PC-3 (cell line): ENCODE measurements at regions of chr3 and their contacts with region 1.

Region 1: DNA sequence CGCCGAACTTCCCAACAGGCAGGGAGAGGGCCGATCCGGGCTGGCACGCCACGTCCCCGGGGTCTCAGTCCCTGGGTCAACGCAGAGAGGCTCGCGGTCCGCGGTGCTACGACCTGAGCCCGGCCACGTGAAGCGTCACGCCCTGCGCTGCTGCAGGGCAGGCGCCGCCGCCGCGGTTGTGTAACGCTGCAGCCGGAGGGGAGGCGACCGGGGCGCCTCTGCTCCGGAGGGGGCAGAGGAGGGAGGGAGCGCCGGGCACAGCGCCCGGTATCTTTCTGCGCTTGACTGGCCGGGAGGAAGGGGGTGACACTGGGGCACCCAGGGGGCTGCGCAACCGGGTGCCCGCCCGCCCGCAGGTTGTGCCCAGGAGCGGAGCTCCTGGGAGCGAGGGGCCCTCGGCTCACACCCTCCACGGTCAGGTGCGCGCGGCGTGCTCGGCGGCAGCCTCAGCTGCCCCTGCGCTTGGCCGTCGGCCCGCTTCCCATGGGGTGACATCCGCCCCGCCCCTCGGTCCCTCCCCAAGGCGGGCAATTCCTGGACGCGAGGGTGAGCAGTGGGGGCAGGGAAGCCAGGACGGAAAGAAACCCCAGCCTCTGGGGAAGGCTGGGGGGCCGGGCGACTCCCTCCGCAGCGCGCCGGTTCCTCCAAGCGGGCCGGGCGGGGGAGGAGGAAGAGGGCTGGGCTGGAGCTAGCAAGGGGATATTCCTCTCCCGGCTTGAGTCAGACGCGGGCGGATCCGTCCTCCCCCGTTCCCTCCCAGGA is 852 bp upstream of the BHLHE40 start:
- DNase-seq: peak; percentile 98
- ATAC-seq: peak; percentile 65
- H3K4me3 ChIP-seq: peak overlapping the region; percentile 69
- H3K27ac ChIP-seq: peak overlapping the region; percentile 95
- H3K4me1 ChIP-seq: peaks cover 29% of the 10 kb centered on the region
- H3K27me3 ChIP-seq: no peaks in the 10 kb centered on the region
- CTCF ChIP-seq: no peak

Region 2: DNA sequence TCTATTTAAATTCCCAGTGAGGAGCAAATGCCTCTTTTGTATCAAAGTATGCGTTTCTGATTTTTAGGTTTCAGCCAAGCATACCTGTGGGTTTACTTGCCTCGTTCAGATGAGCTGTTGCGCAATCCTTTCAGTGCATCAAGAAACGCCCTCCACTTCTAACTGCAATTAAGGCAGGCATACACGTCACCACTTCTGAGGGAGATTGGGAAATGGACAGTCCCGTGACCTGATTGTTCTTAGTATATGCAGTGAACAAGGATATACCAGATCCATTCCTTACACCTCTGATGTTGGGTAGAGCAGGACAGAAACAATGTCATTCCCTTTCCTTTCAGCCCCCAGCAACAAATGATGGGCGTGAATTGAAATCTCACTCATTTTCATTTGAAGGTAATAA is 266.2 kb before region 1 on chr3:
- CTCF ChIA-PET with region 1: interaction called, 7 read pairs
- POLR2A ChIA-PET with region 1: interaction called, 15 read pairs
- intact Hi-C with region 1: loop called (anchors 1 kb)
- DNase-seq: peak; percentile 55
- ATAC-seq: no peak
- H3K4me3 ChIP-seq: no peak overlapping the region
- H3K27ac ChIP-seq: peak overlapping the region; percentile 18; the same call in 1 of the 2 replicates
- H3K4me1 ChIP-seq: peaks cover 28% of the 10 kb centered on the region
- H3K27me3 ChIP-seq: no peaks in the 10 kb centered on the region
- CTCF ChIP-seq: no peak

Region 3: GRCh38 chr3:4741404-4742307 is 236.7 kb before region 1 on chr3:
- CTCF ChIA-PET with region 1: no interaction called
- POLR2A ChIA-PET with region 1: no interaction called
- intact Hi-C with region 1: loop called (anchors 1 kb)
- DNase-seq: peak; percentile 98
- ATAC-seq: peak; percentile 64
- H3K4me3 ChIP-seq: no peak overlapping the region
- H3K27ac ChIP-seq: peak overlapping the region; percentile 97
- H3K4me1 ChIP-seq: peaks cover 53% of the 10 kb centered on the region
- H3K27me3 ChIP-seq: no peaks in the 10 kb centered on the region
- CTCF ChIP-seq: no peak

Region 4: GRCh38 chr3:4888913-4889846 is 89.2 kb before region 1 on chr3:
- CTCF ChIA-PET with region 1: interaction called, 4 read pairs
- POLR2A ChIA-PET with region 1: interaction called, 17 read pairs
- intact Hi-C with region 1: loop called (anchors 2 kb)
- DNase-seq: peak; percentile 31
- ATAC-seq: no peak
- H3K4me3 ChIP-seq: no peak overlapping the region
- H3K27ac ChIP-seq: no peak overlapping the region
- H3K4me1 ChIP-seq: peaks cover 36% of the 10 kb centered on the region
- H3K27me3 ChIP-seq: no peaks in the 10 kb centered on the region
- CTCF ChIP-seq: no peak

Region 5: GRCh38 chr3:4950351-4950784 is 28.0 kb before region 1 on chr3:
- CTCF ChIA-PET with region 1: interaction called, 10 read pairs
- POLR2A ChIA-PET with region 1: interaction called, 4 read pairs
- intact Hi-C with region 1: loop called (anchors 1 kb)
- DNase-seq: no peak
- ATAC-seq: no peak
- H3K4me3 ChIP-seq: peak overlapping the region; percentile 9; the same call in 1 of the 2 replicates
- H3K27ac ChIP-seq: peak overlapping the region; percentile 91
- H3K4me1 ChIP-seq: peaks cover 13% of the 10 kb centered on the region; the same call in 1 of the 2 replicates
- H3K27me3 ChIP-seq: no peaks in the 10 kb centered on the region
- CTCF ChIP-seq: no peak

Region 6: DNA sequence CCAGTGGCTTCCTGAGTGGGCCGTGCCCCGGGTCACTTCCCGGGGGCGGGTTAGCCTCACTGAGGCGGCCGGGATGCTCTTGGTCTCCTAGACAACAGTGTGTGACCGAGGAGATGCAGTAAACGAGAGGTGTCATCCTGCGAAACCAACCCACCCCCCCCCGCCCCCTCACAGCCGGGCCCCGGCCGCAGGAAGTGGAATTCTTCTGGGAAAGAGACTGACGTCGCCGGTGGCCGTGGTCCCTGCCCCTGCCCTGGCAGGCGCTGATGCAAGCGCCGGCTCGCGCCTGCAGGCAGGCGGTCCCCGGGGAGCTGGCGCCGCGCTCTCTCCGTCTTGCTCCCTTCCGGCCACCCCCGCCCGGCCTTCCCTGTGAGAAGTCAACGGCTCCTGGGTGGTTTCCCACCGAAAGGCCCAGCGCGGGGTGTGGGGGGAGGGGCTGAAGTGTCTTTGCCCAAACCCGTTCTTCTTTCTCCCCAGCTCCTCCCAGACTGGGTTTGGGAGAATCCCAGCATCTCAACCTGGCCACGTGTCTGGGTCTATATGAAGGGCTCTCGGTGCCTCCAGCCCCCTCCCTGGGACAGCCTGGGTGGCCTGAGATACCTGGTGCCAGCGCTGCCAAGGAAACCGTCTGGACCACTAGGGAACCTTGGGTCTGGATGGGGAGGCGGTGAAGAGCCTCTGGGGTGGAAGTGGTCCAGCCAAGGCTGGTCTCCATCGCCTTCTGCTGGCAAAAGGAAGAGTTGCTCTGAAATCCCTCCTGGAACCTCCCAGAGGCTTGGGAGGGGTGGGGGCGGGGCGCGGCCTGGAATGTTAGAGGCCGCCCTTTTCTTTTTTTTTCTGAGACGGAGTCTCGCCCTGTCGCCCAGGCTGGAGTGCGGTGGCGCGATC is 48.2 kb after region 1 on chr3:
- CTCF ChIA-PET with region 1: interaction called, 10 read pairs
- POLR2A ChIA-PET with region 1: interaction called, 79 read pairs
- intact Hi-C with region 1: loop called (anchors 1 kb)
- DNase-seq: peak; percentile 95
- ATAC-seq: peak; percentile 68
- H3K4me3 ChIP-seq: peak overlapping the region; percentile 64
- H3K27ac ChIP-seq: peak overlapping the region; percentile 96
- H3K4me1 ChIP-seq: peaks cover 43% of the 10 kb centered on the region
- H3K27me3 ChIP-seq: no peaks in the 10 kb centered on the region
- CTCF ChIP-seq: peak; percentile 76

Region 7: DNA sequence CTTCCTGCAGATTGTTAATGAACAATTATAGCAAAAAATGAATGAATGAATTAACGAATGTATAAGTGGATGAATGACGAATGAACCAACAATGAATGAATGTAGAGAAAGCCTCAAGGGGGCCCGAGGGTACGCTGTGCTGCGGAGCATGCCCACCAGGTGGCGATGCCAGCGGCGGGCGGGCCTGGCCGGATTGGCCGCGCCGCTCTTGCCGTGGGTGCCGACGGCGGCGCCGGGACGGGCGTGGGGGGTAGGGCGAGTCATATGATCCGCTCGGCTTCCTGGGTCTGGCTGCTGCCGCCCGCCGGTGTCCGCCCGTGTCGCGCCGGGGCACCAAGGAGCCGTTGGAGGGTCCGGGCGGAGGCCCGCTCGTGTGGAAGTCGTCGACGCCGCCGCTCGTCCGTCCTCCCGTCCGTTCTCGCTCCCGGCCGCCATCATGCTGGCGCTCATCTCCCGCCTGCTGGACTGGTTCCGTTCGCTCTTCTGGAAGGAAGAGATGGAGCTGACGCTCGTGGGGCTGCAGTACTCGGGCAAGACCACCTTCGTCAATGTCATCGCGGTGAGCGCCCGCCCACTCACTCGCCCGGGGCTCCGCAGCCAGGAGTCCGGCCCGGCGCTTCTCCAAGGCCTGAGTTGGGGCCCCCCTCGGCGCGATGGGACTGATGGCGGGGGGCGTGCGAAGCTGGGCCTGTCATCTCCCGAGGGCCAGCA is 143.8 kb after region 1 on chr3 and contains the start of gene ARL8B:
- CTCF ChIA-PET with region 1: interaction called, 3 read pairs
- POLR2A ChIA-PET with region 1: no interaction called
- intact Hi-C with region 1: loop called (anchors 5 kb)
- DNase-seq: peak; percentile 94
- ATAC-seq: peak; percentile 86
- H3K4me3 ChIP-seq: peak within 1 kb of the TSS; percentile 93
- H3K27ac ChIP-seq: peak within 1 kb of the TSS; percentile 78
- H3K4me1 ChIP-seq: peaks cover 31% of the 10 kb centered on the region
- H3K27me3 ChIP-seq: no peaks in the 10 kb centered on the region
- CTCF ChIP-seq: peak; percentile 98
- total RNA-seq, gene ARL8B: 43.8 and 45.3 TPM in 2 replicates